PC-9 (cell line): ENCODE measurements at regions of chr11 and their contacts with region 1.

Region 1: DNA sequence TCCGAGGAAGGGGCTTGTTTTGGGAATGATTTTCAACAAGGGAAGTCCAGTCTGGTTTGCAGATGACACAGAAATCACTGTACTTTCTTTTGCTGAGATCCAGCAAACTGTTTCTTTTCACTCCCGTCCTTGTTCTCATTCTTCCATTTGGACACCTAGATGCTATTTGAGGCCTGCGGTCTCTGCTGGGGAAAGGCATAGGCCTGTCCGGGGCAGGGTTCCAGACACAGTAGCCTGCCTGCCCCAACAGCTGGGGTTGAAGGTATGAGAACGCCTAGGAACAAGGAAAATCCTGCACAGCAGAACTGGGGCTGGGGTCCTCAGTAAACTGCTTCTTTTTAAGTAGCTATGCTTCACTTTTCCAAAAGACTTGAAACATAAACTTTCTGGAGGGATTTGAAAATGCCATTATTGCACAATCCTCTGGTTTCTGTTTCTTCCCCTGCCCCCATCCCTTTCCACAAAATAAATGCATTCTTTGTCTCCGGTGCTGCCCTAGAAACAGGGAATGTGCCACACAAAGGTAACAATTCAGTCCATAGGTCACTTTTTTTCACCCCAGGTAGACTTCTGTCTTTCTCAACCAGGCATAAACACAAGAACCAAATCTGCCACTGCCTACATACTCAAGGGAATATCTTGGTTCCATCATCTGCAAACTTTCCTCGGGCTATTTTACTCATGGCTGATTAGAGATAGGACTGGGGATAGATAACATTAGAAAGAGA is 174.8 kb upstream of the MTMR2 start:
- DNase-seq: peak; percentile 64 to 99
- H3K4me3 ChIP-seq: peak overlapping the region; percentile 38; the same call in 1 of the 2 replicates
- H3K27ac ChIP-seq: peak overlapping the region; percentile 98
- H3K4me1 ChIP-seq: peaks cover 93% of the 10 kb centered on the region
- H3K27me3 ChIP-seq: no peaks in the 10 kb centered on the region
- CTCF ChIP-seq: no peak

Region 2: GRCh38 chr11:95641495-95641894 is 457.2 kb before region 1 on chr11:
- CTCF ChIA-PET with region 1: no interaction called
- POLR2A ChIA-PET with region 1: no interaction called
- intact Hi-C with region 1: no loop called
- DNase-seq: no peak
- H3K4me3 ChIP-seq: no peak overlapping the region
- H3K27ac ChIP-seq: no peak overlapping the region
- H3K4me1 ChIP-seq: no peaks in the 10 kb centered on the region
- H3K27me3 ChIP-seq: no peaks in the 10 kb centered on the region
- CTCF ChIP-seq: no peak

Region 3: GRCh38 chr11:95923728-95924413 is 174.8 kb before region 1 on chr11 and contains the start of gene MTMR2:
- CTCF ChIA-PET with region 1: no interaction called
- POLR2A ChIA-PET with region 1: no interaction called
- intact Hi-C with region 1: loop called (anchors 2 kb)
- DNase-seq: peak; percentile 72 to 77
- H3K4me3 ChIP-seq: peak within 1 kb of the TSS; percentile 67
- H3K27ac ChIP-seq: peak within 1 kb of the TSS; percentile 97
- H3K4me1 ChIP-seq: peaks cover 37% of the 10 kb centered on the region
- H3K27me3 ChIP-seq: no peaks in the 10 kb centered on the region
- CTCF ChIP-seq: no peak
- total RNA-seq, gene MTMR2: 41.6 and 60.7 TPM in 2 replicates

Region 4: DNA sequence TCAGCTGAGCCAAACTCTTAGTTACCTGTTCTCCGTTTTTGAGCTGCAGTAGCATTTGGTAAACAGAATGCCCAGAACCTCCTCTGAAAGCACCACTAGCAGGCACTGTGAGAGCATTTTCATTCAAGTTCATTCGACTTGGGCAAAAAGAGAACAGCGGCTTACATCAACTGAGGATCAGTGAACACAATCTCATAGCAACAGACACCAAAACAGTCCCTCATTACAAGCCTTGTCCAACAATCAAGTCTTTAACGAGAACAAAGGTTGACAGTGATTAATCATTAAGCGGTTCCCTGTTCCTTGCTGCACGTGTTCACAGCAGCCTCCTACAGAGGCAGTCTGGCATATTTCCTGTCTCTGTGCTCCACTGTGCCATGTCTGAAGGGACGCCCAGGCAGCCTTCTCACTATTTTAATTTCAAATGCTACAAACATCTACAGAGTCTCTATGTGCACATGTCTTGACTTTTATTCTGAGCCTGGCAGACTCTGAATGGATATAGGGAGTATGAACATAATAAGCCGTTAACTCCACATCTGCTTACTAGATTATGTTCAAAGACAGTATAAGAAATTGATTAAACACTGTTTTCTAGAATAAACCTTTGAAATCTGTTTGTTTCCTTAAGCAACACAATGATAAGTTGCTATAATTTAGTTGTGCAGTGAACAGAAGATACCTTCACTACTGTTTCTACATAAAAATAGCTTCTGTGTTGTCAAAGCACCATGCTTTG is 86.4 kb before region 1 on chr11:
- CTCF ChIA-PET with region 1: no interaction called
- POLR2A ChIA-PET with region 1: no interaction called
- intact Hi-C with region 1: loop called (anchors 1 kb)
- DNase-seq: peak; percentile 53 to 65
- H3K4me3 ChIP-seq: no peak overlapping the region
- H3K27ac ChIP-seq: no peak overlapping the region
- H3K4me1 ChIP-seq: peaks cover 24% of the 10 kb centered on the region
- H3K27me3 ChIP-seq: no peaks in the 10 kb centered on the region
- CTCF ChIP-seq: peak; percentile 21; the same call in 1 of the 2 replicates

Region 5: GRCh38 chr11:96054870-96055705 is 43.6 kb before region 1 on chr11:
- CTCF ChIA-PET with region 1: no interaction called
- POLR2A ChIA-PET with region 1: no interaction called
- intact Hi-C with region 1: loop called (anchors 1 kb)
- DNase-seq: peak in 1 of 2 experiments; percentile 50
- H3K4me3 ChIP-seq: no peak overlapping the region
- H3K27ac ChIP-seq: peak overlapping the region; percentile 47
- H3K4me1 ChIP-seq: peaks cover 64% of the 10 kb centered on the region
- H3K27me3 ChIP-seq: no peaks in the 10 kb centered on the region
- CTCF ChIP-seq: peak; percentile 79

Region 6: GRCh38 chr11:96155627-96156378 is 57.1 kb after region 1 on chr11:
- CTCF ChIA-PET with region 1: no interaction called
- POLR2A ChIA-PET with region 1: no interaction called
- intact Hi-C with region 1: loop called (anchors 1 kb)
- DNase-seq: peak; percentile 80 to 95
- H3K4me3 ChIP-seq: no peak overlapping the region
- H3K27ac ChIP-seq: peak overlapping the region; percentile 73
- H3K4me1 ChIP-seq: peaks cover 45% of the 10 kb centered on the region
- H3K27me3 ChIP-seq: no peaks in the 10 kb centered on the region
- CTCF ChIP-seq: no peak; the same call in 1 of the 2 replicates

Region 7: GRCh38 chr11:96228473-96228891 is 129.8 kb after region 1 on chr11:
- CTCF ChIA-PET with region 1: no interaction called
- POLR2A ChIA-PET with region 1: no interaction called
- intact Hi-C with region 1: loop called (anchors 1 kb)
- DNase-seq: peak; percentile 63 to 83
- H3K4me3 ChIP-seq: no peak overlapping the region
- H3K27ac ChIP-seq: peak overlapping the region; percentile 48
- H3K4me1 ChIP-seq: peaks cover 30% of the 10 kb centered on the region
- H3K27me3 ChIP-seq: no peaks in the 10 kb centered on the region
- CTCF ChIP-seq: no peak

Region 8: GRCh38 chr11:96324960-96325359 is 226.3 kb after region 1 on chr11:
- CTCF ChIA-PET with region 1: no interaction called
- POLR2A ChIA-PET with region 1: no interaction called
- intact Hi-C with region 1: loop called (anchors 5 kb)
- DNase-seq: peak; percentile 49 to 97
- H3K4me3 ChIP-seq: peak overlapping the region; percentile 23; the same call in 1 of the 2 replicates
- H3K27ac ChIP-seq: peak overlapping the region; percentile 86
- H3K4me1 ChIP-seq: peaks cover 56% of the 10 kb centered on the region
- H3K27me3 ChIP-seq: no peaks in the 10 kb centered on the region
- CTCF ChIP-seq: no peak